ENCODE measurements at regions of chr20 and their contacts with region 1.

Region 1: DNA sequence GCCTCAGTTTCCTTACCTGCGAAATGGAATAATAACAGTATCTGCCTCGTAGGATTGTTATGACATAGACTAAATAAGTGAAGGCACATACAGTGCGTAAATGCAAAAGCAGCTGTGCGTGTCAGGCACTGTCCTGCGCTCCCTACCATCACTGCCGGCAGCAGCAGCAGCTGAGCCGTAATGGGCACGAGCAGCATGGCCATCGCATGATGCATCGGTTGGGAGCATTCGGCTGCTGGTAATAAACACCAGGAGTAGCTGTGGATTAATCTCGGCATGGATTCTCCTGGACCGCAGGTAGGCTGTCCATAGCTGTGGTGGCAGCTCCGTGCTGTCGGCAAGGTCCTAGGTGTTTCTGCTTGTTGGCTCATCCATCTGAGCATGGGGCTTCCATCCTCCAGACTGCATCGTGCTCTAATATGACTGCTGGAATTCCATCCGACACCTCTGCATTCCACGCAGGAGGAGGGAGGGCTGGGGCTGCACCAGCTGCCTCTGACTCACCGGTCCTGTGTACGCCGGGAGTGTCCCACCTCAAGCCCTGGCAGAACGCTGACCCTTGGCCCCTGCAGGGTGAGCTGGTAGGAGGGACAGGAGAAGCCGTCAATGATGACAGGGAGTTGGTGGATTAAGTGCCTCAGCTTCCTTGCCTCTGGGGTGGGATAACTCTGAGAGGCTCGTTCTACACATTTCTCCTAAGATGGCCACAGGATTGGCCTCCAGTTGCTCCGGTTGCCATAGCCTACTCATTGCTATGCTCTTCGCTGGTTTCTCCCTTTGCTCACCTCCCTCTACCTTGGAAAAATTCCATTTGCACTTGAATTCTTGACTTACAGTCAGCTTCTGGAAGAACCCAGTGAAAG is 100.9 kb upstream of the PMEPA1 start:
- DNase-seq: peak in 1 of 2 donors; percentile 46
- ATAC-seq: no peak
- H3K4me3 ChIP-seq: no peak overlapping the region
- H3K27ac ChIP-seq: no peak overlapping the region
- H3K4me1 ChIP-seq: no peaks in the 10 kb centered on the region
- H3K27me3 ChIP-seq: no peaks in the 10 kb centered on the region

Region 2: DNA sequence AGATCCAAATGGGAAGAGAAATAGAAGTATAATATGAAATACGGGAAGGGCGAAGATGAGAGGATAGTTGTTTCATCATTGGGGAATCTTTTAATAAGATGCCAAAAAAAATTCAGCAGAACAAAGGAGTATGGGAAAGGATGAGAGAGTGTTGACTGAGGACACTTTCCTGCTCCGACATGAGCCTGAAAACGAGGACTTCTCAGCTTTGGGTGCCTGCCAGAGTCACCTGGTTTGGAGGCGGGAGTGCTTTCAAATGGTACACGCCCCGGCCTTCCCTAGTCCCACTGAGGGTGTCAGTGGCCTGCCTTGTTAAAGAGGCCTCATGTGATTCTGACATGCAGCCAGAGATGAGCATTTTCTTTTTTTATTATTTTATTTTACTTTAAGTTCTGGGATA is 166.8 kb after region 1 on chr20:
- intact Hi-C with region 1: no loop called
- DNase-seq: peak in 1 of 2 donors; percentile 61
- ATAC-seq: no peak
- H3K4me3 ChIP-seq: no peak overlapping the region
- H3K27ac ChIP-seq: no peak overlapping the region
- H3K4me1 ChIP-seq: no peaks in the 10 kb centered on the region
- H3K27me3 ChIP-seq: no peaks in the 10 kb centered on the region

Region 3: DNA sequence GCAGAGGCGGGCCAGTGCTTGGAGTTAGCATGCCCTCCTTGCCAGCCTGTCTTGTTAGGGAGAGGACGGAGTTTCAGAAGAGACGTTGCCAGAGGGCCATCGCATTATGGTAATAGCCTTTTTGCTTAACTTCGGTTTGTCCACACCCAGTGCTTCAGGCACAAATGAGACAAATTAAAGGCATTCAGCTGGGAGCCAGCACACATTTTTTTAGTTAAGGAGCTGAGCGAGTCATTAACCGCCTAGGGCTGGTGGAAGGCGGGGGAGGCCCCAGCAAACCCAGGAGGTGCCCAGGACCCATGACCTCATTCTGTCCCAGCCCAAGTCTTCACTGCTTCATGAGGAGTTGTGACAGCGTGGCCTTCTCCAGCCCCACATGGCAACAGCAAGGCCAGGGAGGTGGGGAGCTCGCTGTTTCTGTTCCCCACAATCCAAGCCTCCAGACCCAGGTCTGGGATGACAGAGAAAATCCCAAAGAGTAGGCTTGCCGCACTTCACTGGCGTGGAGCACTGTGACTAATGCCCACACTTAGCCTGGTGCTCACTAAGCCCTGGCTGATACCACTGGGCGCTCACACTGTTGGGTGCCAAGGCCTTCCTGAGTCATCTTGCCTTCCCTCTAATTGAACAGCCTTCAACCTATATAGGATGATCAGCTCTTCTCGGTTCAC is 180.6 kb after region 1 on chr20:
- intact Hi-C with region 1: loop called in 1 of 2 experiments (anchors 10 kb)
- DNase-seq: peak in 1 of 2 donors; percentile 81
- ATAC-seq: peak; percentile 45
- H3K4me3 ChIP-seq: no peak overlapping the region
- H3K27ac ChIP-seq: no peak overlapping the region
- H3K4me1 ChIP-seq: no peaks in the 10 kb centered on the region
- H3K27me3 ChIP-seq: no peaks in the 10 kb centered on the region

Measured in aorta (tissue), 5 donors.